IMR-90 (cell line): ENCODE measurements at regions of chr11 and their contacts with region 1.

Region 1: GRCh38 chr11:123478352-123478987 is 48.4 kb downstream of the GRAMD1B start:
- DNase-seq: peak; percentile 85
- ATAC-seq: peak; percentile 78
- H3K4me3 ChIP-seq: no peak overlapping the region
- H3K27ac ChIP-seq: no peak overlapping the region
- H3K4me1 ChIP-seq: peaks cover 16% of the 10 kb centered on the region
- H3K27me3 ChIP-seq: no peaks in the 10 kb centered on the region
- CTCF ChIP-seq: peak; percentile 92
- POLR2A ChIP-seq: no peak
- RAD21 ChIP-seq: peak; percentile 93

Region 2: DNA sequence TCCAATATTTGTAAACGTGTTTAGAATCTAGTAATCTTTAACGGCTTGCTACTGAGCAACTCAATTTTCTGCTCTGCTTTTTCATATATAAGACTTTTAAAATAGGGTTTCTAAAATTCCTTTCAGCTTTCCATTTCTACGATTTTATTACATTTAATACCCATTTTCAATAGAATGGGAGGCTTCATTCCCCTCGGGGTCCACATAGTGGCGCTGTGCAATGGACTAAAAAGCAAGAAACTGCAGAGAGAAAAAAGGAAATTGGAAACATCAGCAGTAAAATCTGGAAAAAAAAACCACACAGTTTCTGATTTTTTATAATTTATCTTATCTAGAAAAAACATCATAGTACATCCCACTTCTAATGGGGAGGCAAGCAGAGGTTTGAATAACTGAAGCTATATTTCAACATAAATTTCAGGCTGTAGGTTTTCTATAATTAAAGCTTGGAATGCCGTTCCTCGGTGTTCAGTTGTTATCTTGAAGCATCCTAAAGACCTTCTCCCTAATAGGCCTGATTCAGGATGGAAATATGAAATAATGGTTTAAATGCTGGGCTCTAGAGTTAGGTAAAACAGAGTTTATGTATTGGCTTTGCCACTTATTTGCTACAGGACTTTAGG is 614.7 kb before region 1 on chr11:
- CTCF ChIA-PET with region 1: no interaction called
- POLR2A ChIA-PET with region 1: no interaction called
- dilution Hi-C with region 1: no loop called
- in situ Hi-C with region 1: no loop called
- intact Hi-C with region 1: loop called (anchors 5 kb)
- DNase-seq: peak; percentile 50
- ATAC-seq: peak; percentile 57; the same call in 1 of the 2 replicates
- H3K4me3 ChIP-seq: no peak overlapping the region
- H3K27ac ChIP-seq: no peak overlapping the region
- H3K4me1 ChIP-seq: no peaks in the 10 kb centered on the region
- H3K27me3 ChIP-seq: peaks cover 32% of the 10 kb centered on the region
- CTCF ChIP-seq: peak; percentile 96
- POLR2A ChIP-seq: no peak
- RAD21 ChIP-seq: peak; percentile 86

Region 3: DNA sequence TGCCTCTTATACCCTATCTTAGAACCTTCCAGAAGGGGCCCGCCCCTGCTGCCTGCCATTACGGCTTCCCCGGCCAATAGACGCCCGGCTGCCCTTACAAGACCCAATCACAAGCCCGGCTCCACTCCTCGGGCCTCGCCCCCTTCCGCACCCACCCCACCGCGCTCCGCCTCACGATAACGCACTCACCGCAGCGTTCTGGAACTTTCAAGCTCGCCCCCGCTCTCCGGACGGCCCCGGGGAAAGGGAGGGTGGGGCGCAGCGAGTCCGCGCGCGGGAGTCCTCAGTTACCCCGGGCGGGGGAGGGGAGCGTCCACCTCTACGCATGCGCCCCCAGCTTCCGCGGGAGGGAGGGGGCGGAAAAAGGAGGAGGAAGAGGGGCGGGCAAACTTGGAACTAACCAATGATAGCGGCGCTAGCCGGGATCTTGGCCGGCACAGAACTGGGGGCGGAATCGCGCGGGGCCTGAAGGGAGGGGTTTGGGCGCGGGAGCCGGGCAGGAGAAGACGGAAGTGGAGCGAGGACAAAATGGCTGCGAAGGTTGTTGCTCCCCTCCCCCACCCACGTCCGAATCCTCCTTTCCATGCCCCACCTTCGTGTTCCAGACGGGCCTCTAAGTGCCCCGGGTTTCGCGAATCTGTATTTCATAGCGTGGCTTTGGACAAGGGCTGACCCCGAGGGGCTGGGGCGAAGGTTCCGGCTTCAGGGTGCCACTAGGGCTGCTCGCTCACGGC is 416.1 kb before region 1 on chr11:
- CTCF ChIA-PET with region 1: interaction called, 4 read pairs
- POLR2A ChIA-PET with region 1: no interaction called
- dilution Hi-C with region 1: no loop called
- in situ Hi-C with region 1: no loop called
- intact Hi-C with region 1: loop called (anchors 1 kb)
- DNase-seq: peak; percentile 100
- ATAC-seq: peak; percentile 85
- H3K4me3 ChIP-seq: peak overlapping the region; percentile 86
- H3K27ac ChIP-seq: peak overlapping the region; percentile 95
- H3K4me1 ChIP-seq: peaks cover 5% of the 10 kb centered on the region
- H3K27me3 ChIP-seq: no peaks in the 10 kb centered on the region
- CTCF ChIP-seq: no peak
- POLR2A ChIP-seq: no peak
- RAD21 ChIP-seq: no peak

Region 4: DNA sequence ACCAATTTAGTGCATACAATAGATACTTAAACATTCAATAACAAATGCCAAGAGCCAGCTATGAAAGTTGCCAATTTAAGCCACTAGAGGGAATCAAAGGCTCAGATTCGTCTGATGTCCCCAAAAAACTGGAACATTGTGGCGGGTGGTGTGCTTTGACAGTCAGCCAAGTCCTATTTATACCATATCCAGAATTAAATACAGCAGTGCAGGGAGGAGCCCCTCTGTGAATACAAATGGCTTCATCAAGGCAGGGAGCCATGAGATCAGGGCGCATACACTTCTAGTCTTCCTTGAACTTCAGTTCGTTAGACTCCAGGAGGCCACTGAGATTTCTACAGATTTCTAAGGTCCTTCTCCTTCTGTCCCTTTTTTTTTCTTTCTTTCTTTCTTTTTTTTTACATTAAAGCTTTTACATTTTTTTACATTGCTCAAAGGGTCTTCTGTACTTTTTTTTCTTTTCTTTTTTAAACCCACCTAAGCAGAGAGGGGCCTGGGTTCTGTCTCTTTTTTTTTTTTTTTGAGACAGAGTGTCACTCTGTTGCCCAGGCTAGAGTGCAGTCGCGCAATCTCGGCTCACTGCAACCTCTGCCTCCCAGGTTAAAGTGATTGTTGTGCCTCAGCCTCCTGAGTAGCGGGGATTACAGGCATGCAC is 375.0 kb before region 1 on chr11:
- CTCF ChIA-PET with region 1: interaction called, 3 read pairs
- POLR2A ChIA-PET with region 1: no interaction called
- dilution Hi-C with region 1: no loop called
- in situ Hi-C with region 1: loop called (anchors 10 kb)
- intact Hi-C with region 1: loop called (anchors 1 kb)
- DNase-seq: peak; percentile 75
- ATAC-seq: peak; percentile 50
- H3K4me3 ChIP-seq: no peak overlapping the region
- H3K27ac ChIP-seq: no peak overlapping the region
- H3K4me1 ChIP-seq: peaks cover 10% of the 10 kb centered on the region
- H3K27me3 ChIP-seq: no peaks in the 10 kb centered on the region
- CTCF ChIP-seq: peak; percentile 75
- POLR2A ChIP-seq: no peak
- RAD21 ChIP-seq: peak; percentile 83

Region 5: DNA sequence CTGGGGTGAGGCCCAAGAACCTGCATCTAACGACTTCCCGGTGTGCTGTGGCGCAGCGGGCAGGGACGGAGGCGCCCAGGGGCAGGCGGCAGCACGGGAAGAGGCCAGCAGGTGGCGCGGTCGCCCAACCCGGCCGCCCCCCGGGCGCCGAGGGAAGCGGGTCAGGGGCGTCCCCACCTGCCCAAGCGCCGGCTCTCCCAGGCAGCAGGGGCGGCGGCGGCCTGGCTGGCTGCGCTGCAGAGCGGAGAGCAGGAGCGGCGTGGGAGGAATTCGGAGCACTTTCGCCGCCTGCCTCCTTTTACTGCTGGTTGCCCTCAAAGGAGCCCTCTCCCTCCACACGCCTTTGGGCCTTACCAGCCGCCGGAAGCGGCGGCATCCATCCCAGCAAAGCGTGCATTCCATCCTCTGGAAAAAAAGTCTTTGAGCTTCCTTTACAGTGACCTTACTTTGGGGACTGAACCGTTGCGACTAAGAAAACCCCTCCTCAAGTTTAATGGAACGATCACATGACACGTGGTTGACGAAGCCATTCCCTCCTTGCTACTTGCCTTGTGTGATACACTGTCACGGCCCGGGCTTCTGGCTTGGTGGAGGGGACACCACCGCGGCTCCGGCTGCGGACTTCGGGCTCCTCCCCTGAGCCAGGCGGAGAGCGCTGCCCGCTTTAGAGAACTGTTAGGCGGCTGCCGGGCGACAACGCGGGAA is 176.6 kb before region 1 on chr11:
- CTCF ChIA-PET with region 1: no interaction called
- POLR2A ChIA-PET with region 1: no interaction called
- dilution Hi-C with region 1: no loop called
- in situ Hi-C with region 1: loop called (anchors 5 kb)
- intact Hi-C with region 1: loop called (anchors 1 kb)
- DNase-seq: peak; percentile 11
- ATAC-seq: peak; percentile 94
- H3K4me3 ChIP-seq: peak overlapping the region; percentile 32
- H3K27ac ChIP-seq: no peak overlapping the region
- H3K4me1 ChIP-seq: peaks cover 6% of the 10 kb centered on the region; the same call in 1 of the 2 replicates
- H3K27me3 ChIP-seq: peaks cover 21% of the 10 kb centered on the region; the same call in 1 of the 2 replicates
- CTCF ChIP-seq: peak; percentile 70
- POLR2A ChIP-seq: no peak
- RAD21 ChIP-seq: peak; percentile 63

Region 6: GRCh38 chr11:123307276-123307675 is 171.2 kb before region 1 on chr11:
- CTCF ChIA-PET with region 1: no interaction called
- POLR2A ChIA-PET with region 1: interaction called, 12 read pairs
- dilution Hi-C with region 1: no loop called
- in situ Hi-C with region 1: loop called (anchors 5 kb)
- intact Hi-C with region 1: no loop called
- DNase-seq: no peak
- ATAC-seq: no peak
- H3K4me3 ChIP-seq: no peak overlapping the region
- H3K27ac ChIP-seq: no peak overlapping the region
- H3K4me1 ChIP-seq: peaks cover 2% of the 10 kb centered on the region; the same call in 1 of the 2 replicates
- H3K27me3 ChIP-seq: peaks cover 11% of the 10 kb centered on the region
- CTCF ChIP-seq: no peak
- POLR2A ChIP-seq: no peak
- RAD21 ChIP-seq: no peak

Region 7: GRCh38 chr11:123407130-123407995 is 71.1 kb before region 1 on chr11:
- CTCF ChIA-PET with region 1: interaction called, 14 read pairs
- POLR2A ChIA-PET with region 1: no interaction called
- dilution Hi-C with region 1: no loop called
- in situ Hi-C with region 1: loop called (anchors 5 kb)
- intact Hi-C with region 1: loop called (anchors 1 kb)
- DNase-seq: peak; percentile 78
- ATAC-seq: peak; percentile 56
- H3K4me3 ChIP-seq: no peak overlapping the region
- H3K27ac ChIP-seq: no peak overlapping the region
- H3K4me1 ChIP-seq: no peaks in the 10 kb centered on the region
- H3K27me3 ChIP-seq: peaks cover 41% of the 10 kb centered on the region
- CTCF ChIP-seq: peak; percentile 76
- POLR2A ChIP-seq: no peak
- RAD21 ChIP-seq: peak; percentile 84

Region 8: DNA sequence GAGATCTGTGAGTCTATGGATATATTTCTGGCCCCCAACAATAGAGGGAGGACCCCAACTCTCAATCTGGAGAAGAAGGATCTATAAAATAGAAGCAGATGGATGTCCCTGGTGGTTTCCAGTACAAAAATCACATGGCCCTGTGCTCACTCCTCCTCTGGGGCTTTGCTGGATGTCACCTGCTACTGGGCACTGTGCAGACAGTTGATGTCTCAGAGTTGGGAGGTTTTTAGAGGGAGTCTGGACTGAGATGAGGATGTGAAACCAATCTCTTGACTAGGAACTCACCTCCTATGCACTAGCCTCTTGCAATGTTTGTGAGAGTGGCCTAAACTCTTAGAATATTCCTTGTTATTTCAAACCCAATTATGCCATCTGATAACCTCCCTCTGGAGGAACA is 68.7 kb after region 1 on chr11:
- CTCF ChIA-PET with region 1: no interaction called
- POLR2A ChIA-PET with region 1: no interaction called
- dilution Hi-C with region 1: no loop called
- in situ Hi-C with region 1: no loop called
- intact Hi-C with region 1: no loop called
- DNase-seq: no peak
- ATAC-seq: no peak
- H3K4me3 ChIP-seq: no peak overlapping the region
- H3K27ac ChIP-seq: no peak overlapping the region
- H3K4me1 ChIP-seq: peaks cover 19% of the 10 kb centered on the region
- H3K27me3 ChIP-seq: no peaks in the 10 kb centered on the region
- CTCF ChIP-seq: no peak
- POLR2A ChIP-seq: no peak
- RAD21 ChIP-seq: no peak

Region 9: DNA sequence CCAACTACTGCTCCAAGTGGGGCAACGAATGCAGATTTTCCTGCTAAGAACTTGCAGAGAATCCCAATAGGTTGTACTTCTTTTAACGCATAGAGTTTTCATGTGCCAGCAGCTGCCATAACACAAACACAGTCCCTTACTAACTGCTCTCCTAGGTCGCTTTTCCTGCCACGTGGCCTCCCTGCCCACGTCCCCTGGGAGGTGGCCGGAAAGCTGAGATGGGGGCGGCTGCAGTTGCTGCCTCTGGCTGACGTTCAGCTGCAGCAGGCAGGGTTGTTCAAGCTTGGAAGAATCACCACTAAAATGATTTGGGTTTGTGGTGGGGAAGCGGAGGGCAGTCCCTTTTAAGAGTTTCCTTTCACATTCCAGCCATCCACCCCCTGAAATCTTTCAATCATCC is 223.7 kb after region 1 on chr11:
- CTCF ChIA-PET with region 1: no interaction called
- POLR2A ChIA-PET with region 1: no interaction called
- dilution Hi-C with region 1: no loop called
- in situ Hi-C with region 1: no loop called
- intact Hi-C with region 1: no loop called
- DNase-seq: no peak
- ATAC-seq: no peak
- H3K4me3 ChIP-seq: no peak overlapping the region
- H3K27ac ChIP-seq: no peak overlapping the region
- H3K4me1 ChIP-seq: no peaks in the 10 kb centered on the region
- H3K27me3 ChIP-seq: peaks cover 26% of the 10 kb centered on the region
- CTCF ChIP-seq: no peak
- POLR2A ChIP-seq: no peak
- RAD21 ChIP-seq: no peak